Panc1 (cell line): ENCODE measurements at regions of chr2 and their contacts with region 1.

Region 1: DNA sequence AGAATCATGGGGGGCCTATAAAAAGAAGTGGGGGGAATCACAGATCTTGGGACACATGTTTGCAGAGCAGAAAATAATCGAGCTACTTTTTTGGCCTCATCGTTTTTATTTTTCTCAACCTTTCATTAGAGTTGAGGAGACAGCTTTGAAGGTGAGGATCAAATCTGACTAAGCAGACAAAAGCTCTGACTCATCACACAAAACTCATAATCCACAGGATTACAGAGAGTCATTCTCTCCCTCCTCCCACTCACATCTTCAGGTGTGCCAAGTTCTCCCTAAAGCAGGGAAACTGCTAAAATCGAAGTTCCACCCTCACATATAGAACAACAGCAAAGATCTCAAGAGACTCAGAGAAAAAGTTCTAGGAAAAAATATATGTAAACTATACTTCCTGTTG is 15.6 kb downstream of the BAZ2B start:
- DNase-seq: no peak
- ATAC-seq: 0 out of 2 replicates have a peak, but pooled peaks have one; percentile 63
- H3K4me3 ChIP-seq: no peak overlapping the region
- H3K27ac ChIP-seq: no peak overlapping the region
- H3K4me1 ChIP-seq: peaks cover 12% of the 10 kb centered on the region
- H3K27me3 ChIP-seq: no peaks in the 10 kb centered on the region
- CTCF ChIP-seq: no peak

Region 2: DNA sequence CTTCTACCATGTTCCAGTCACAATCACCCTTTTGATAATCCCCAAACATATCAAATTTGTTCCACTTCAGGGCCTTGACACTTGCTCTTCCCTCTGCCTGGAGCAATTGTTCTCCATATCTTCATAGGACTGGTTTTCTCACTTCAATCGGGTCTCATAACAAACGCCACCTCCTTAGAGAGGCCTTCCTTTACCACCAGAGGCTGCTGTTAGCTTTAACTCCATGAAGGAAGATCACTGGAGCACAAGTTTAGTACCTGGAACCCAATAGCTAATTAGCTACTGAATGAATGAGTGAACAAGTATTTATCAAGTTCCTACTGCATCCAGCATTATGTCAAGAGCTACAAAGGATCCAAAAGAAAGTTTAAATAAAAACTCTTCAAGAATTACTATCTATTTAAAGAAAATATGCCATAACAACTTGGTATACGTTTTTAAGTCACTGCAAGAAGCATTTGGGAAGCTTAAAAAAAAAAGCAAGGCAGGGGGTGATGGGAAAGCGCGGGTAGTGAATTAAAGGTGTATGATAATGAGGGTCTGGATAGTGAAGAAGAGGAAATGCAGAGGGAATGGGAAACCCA is 43.2 kb before region 1 on chr2:
- CTCF ChIA-PET with region 1: no interaction called
- POLR2A ChIA-PET with region 1: interaction called, 12 read pairs
- in situ Hi-C with region 1: no loop called
- intact Hi-C with region 1: no loop called
- DNase-seq: peak; percentile 17
- ATAC-seq: peak; percentile 86
- H3K4me3 ChIP-seq: no peak overlapping the region
- H3K27ac ChIP-seq: no peak overlapping the region
- H3K4me1 ChIP-seq: no peaks in the 10 kb centered on the region
- H3K27me3 ChIP-seq: no peaks in the 10 kb centered on the region
- CTCF ChIP-seq: peak; percentile 80

Region 3: GRCh38 chr2:160125828-160126227 is 525.1 kb after region 1 on chr2:
- CTCF ChIA-PET with region 1: no interaction called
- POLR2A ChIA-PET with region 1: no interaction called
- in situ Hi-C with region 1: no loop called
- intact Hi-C with region 1: no loop called
- DNase-seq: no peak
- ATAC-seq: no peak
- H3K4me3 ChIP-seq: no peak overlapping the region
- H3K27ac ChIP-seq: no peak overlapping the region
- H3K4me1 ChIP-seq: no peaks in the 10 kb centered on the region
- H3K27me3 ChIP-seq: no peaks in the 10 kb centered on the region
- CTCF ChIP-seq: no peak